ENCODE measurements at regions of chr16 and their contacts with region 1.

Region 1: DNA sequence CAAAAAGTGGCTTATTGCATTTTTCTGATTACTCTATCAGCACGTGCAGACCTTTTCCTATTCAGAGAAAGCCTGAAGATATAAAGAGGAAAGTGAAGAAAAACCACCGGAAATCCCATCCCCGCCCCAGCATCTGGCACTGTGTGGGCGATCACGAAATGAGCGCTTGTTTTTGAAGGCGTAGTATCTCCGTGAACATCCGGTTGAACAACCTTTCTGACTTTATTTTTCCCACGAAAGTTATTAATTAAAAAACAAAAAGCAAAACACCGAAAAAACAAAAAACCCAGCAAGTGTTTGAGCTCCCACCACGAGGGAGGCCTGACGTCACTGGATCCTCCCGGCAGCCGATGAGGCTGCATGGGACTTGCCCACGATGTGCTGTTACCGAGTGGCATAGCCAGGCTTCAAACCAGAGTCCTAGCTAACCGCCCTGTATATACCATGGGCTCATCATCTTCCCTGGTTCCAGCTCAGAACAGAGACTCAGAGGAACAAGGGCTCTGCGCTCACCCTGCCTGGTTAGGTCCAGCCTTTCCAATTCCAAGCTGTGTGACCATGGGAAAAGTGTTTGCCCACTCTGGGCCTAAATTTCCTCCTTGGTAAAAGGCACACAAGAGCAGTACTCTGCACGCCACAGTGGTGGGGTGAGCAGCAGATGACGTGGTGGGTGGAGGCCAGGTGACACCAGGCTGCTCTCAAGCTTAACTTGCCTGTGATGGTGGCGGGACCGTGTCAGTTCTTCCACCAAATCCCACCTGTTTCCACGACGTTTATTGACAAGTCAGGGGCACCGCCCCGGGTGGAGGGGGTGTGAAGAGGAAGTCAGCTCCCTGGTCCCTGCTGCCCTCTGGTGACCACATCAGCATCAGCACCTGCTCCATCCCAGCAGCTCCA is 34.3 kb upstream of the IL21R start:
- DNase-seq: peak; percentile 89
- H3K4me3 ChIP-seq: peak overlapping the region; percentile 2
- H3K27ac ChIP-seq: peak overlapping the region; percentile 71
- H3K4me1 ChIP-seq: peaks cover 18% of the 10 kb centered on the region
- H3K27me3 ChIP-seq: no peaks in the 10 kb centered on the region
- CTCF ChIP-seq: peak; percentile 78

Region 2: DNA sequence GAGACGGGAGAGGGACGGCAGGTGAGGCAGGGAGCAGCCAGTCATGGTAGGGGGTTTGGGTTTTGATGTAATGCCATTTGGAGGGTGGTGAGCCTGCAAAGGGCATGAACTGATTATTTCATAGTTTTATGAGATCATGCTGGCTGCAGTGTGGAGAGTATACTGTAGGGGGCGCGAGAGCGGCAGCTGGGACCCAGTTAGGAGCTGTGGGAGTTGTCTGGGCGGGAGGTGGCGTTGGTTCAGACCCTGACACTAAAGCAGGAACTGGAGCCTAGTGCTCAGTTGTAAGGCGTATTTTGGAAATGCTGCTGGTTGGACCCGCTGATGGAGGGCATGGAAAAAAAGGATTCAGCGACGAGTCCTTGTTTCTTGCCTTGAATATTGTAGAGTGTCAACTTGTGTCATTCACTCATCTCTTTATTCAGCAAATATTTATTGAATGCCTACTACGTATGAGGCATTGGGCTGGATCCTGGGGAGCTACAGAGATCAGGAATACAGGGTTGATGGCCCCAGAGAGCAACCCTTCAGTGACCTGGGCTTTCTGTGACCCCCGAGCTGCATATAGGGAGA is 188.1 kb before region 1 on chr16:
- intact Hi-C with region 1: loop called (anchors 1 kb)
- DNase-seq: peak; percentile 93
- H3K4me3 ChIP-seq: no peak overlapping the region
- H3K27ac ChIP-seq: no peak overlapping the region
- H3K4me1 ChIP-seq: no peaks in the 10 kb centered on the region
- H3K27me3 ChIP-seq: no peaks in the 10 kb centered on the region
- CTCF ChIP-seq: peak; percentile 92

Region 3: DNA sequence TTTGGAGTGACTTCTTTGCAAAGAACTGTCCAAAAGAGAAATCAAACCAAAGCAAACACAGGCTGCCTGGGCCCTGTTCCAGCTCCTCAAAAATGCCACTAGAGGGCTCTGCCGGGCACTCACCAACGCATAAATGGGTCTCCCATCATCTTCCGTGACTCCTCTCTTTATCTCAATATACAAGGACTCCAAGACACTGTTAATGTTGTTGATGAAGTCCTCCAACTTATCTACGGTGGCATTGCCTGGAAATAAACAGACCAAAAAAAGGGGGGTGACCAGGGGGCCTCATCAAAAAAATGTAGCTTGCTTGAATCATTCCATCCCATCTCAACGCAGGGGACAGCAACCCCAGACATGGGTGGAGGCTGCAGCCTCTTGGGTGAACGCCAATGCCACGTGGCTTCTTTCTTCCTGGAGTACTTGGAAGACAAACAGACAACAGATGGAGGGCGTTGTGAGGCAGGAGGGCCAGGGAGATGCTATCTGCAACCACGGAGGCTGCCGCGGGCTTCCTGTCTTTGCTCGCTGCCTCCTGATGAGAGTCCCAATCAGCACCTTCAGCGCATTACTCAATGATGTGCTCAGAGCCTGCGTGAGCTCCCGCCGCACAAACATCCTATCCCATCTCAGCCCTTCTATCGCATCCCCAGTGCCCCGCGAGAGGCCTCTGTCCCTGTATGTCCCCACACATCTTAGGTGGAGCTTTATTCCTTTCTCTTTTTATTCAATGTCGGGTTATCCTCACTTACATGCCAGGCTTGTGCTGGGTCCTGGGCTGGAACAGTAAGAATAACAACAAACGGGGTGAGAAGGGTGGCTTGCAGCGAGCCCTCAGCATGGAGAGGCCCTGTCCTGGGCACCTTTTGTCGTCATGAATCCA is 132.4 kb before region 1 on chr16:
- intact Hi-C with region 1: loop called (anchors 5 kb)
- DNase-seq: peak; percentile 95
- H3K4me3 ChIP-seq: no peak overlapping the region
- H3K27ac ChIP-seq: peak overlapping the region; percentile 71
- H3K4me1 ChIP-seq: peaks cover 35% of the 10 kb centered on the region
- H3K27me3 ChIP-seq: no peaks in the 10 kb centered on the region
- CTCF ChIP-seq: peak; percentile 74

Region 4: GRCh38 chr16:27268376-27269299 is 99.1 kb before region 1 on chr16 and contains the start of gene NSMCE1:
- intact Hi-C with region 1: no loop called
- DNase-seq: peak; percentile 100
- H3K4me3 ChIP-seq: peak within 1 kb of the TSS; percentile 80
- H3K27ac ChIP-seq: peak within 1 kb of the TSS; percentile 75
- H3K4me1 ChIP-seq: peaks cover 2% of the 10 kb centered on the region
- H3K27me3 ChIP-seq: no peaks in the 10 kb centered on the region
- CTCF ChIP-seq: no peak
- total RNA-seq, gene NSMCE1: 37.6 to 58.2 TPM

Region 5: DNA sequence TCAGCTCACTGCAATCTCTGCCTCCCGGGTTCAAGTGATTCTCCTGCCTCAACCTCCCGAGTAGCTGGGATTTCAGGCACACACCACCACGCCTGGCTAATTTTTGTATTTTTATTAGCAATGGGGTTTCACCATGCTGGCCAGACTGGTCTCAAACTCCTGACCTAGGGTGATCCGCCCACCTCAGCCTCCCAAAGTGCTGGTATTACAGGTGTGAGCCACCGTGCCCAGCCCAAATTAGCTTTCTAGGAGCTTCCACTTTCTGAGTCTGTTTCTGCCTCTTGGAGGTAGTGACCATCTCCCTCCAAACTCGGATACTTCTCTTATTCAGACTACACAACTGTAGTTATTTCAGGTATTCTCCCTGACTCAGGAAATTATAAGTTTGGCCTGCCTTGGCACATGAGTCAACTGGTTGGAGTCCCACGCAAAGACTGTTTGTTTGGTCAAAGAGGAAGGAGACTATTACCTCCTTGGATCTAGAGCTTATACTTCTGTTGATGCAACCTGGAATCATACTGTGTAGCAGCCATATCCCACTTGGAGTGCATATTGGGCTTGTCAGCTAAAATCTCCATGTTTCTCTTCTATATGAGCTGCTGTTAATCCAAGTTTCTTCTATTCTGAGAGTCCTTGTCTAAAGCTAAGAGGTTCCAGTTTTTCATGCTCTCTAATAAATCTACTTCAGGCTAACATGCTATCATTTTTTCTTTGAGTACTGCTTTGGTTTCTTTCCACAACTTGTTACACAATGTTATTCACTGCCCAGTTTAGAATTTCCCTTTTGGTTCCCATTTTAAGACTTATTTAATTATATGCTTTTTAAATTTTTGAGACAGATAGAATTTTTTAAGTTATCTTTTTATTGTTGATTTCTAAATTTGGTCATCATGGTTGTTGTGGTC is 46.4 kb before region 1 on chr16:
- intact Hi-C with region 1: loop called (anchors 5 kb)
- DNase-seq: no peak
- H3K4me3 ChIP-seq: no peak overlapping the region
- H3K27ac ChIP-seq: peak overlapping the region; percentile 85
- H3K4me1 ChIP-seq: peaks cover 24% of the 10 kb centered on the region
- H3K27me3 ChIP-seq: no peaks in the 10 kb centered on the region
- CTCF ChIP-seq: no peak

Region 6: DNA sequence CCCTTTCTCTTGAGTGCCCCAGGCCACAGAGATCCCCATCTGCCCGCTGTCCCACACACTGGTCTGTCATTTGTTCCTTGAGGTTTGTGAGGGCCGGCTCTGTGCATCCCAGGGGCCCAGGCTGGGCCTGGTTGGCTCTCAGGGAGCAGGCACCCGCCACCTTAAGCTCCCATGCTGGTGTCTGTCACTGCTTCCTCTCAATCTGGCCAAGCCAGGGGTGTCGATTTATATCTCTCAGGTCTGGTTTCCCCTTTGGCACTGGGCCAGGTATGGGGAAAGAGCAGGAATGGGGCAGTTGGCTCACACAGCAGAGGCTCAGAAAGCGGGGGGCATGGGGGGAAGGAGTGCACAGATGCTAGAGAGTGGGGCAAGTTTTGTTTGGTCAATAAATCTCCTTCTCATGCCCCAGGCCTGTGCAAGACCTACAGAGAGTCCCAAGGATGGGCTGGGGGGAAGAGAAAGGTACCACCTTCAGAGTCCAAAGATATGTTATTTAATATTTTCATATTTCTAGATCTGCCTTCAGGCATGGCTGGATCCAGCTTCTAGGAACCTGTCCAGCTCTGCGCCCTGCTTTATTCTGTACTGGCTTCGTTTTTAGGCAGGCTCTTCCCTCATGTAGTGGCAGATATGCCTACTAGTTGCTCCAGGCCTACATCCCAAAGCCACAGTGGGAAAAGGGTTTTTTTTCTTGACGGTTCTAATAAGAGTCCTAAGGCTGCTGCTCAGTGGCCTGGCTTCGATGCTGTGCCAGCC is 19.6 kb before region 1 on chr16:
- intact Hi-C with region 1: no loop called
- DNase-seq: no peak
- H3K4me3 ChIP-seq: no peak overlapping the region
- H3K27ac ChIP-seq: no peak overlapping the region
- H3K4me1 ChIP-seq: no peaks in the 10 kb centered on the region
- H3K27me3 ChIP-seq: no peaks in the 10 kb centered on the region
- CTCF ChIP-seq: no peak

Measured in colonic mucosa (tissue), 4 donors.